ENCODE measurements at regions of chr9 and their contacts with region 1.

Region 1: DNA sequence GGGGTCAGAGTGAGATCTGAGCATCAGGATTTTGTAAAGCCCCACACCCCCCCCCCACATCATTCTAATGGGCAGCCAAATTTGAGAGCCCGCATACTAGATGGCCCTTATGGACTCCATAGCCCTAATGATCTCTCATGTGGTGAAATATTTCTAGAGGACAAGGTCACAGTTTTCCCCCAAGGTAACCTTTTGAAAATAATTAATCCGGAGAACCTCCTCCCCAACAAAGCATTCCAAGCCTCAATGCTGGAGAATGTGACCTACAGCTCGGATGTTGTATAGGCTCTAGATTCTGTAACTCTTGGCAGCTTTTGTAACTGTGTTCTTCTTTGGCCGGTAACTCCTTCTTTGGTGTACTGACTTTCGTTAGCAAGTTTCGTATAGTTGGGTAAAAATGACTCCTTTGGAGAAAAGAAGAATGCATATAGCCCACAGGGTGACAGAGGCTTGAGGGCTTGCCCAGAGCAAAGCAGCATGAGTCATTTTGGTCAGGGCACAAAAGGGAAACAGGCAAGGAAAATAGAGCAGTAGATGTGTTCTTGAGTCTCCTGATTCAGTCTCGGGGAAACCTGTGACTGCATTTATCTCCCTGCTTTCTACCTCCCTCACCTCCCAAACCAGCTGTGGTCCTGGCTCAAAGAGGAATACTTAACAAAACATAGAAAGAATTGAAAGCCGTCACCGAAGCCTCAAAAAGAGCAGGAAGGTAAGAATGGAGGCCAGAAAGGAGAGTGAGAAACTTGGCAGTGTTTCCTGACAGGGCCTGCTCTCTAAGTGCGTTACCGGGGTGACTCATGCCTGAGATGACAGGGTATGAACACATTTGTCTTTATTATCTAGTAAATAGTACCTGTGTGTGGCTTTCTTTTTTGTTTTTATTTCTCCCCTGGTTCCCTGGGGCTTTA is 6.6 kb upstream of the XPA start:
- DNase-seq: no peak
- H3K4me3 ChIP-seq: no peak overlapping the region
- H3K27ac ChIP-seq: no peak overlapping the region
- H3K27me3 ChIP-seq: no peaks in the 10 kb centered on the region
- CTCF ChIP-seq: no peak

Region 2: GRCh38 chr9:98034593-98035546 is 331.2 kb after region 1 on chr9:
- intact Hi-C with region 1: loop called in 1 of 2 experiments (anchors 10 kb)
- DNase-seq: peak; percentile 65 to 88 (median 76)
- H3K4me3 ChIP-seq: peak overlapping the region in 25 of 59 donors; percentile 6 to 47 (median 25)
- H3K27ac ChIP-seq: no peak overlapping the region
- H3K27me3 ChIP-seq: no peaks in the 10 kb centered on the region
- CTCF ChIP-seq: peak; percentile 57 to 93 (median 86)

Measured in dorsolateral prefrontal cortex (tissue), 120 donors.